ENCODE measurements at regions of chr10 and their contacts with region 1.

Region 1: GRCh38 chr10:35546824-35547273 is 58.3 kb upstream of the GJD4 start:
- DNase-seq: peak; percentile 61 to 78
- H3K4me3 ChIP-seq: no peak overlapping the region
- H3K27ac ChIP-seq: peak overlapping the region; percentile 32; the same call in 1 of the 2 replicates
- H3K4me1 ChIP-seq: peaks cover 16% of the 10 kb centered on the region
- H3K27me3 ChIP-seq: no peaks in the 10 kb centered on the region
- CTCF ChIP-seq: no peak

Region 2: DNA sequence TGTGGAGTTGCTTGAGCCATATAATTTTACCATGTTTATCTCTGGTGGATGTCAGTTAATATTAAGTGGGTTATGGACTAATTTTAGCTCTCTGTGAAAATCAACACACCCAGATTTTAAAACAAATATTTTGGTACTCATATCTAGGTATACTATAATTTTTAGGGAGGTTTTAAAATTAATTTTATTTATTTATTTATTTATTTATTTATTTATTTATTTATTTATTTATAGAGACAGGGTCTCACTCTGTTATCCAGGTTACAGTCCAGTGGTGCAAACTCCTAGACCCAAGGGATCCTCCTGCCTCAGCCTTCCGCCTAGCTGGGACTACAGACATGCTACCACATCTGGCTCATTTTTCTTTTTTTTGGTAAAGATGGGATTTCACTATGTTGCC is 427.5 kb before region 1 on chr10:
- CTCF ChIA-PET with region 1: no interaction called
- POLR2A ChIA-PET with region 1: no interaction called
- intact Hi-C with region 1: no loop called
- DNase-seq: no peak
- H3K4me3 ChIP-seq: no peak overlapping the region
- H3K27ac ChIP-seq: no peak overlapping the region
- H3K4me1 ChIP-seq: no peaks in the 10 kb centered on the region
- H3K27me3 ChIP-seq: no peaks in the 10 kb centered on the region
- CTCF ChIP-seq: no peak

Region 3: GRCh38 chr10:35306852-35307256 is 240.0 kb before region 1 on chr10:
- CTCF ChIA-PET with region 1: no interaction called
- POLR2A ChIA-PET with region 1: no interaction called
- intact Hi-C with region 1: loop called (anchors 1 kb)
- DNase-seq: peak; percentile 92 to 95
- H3K4me3 ChIP-seq: peak overlapping the region; percentile 27; the same call in 1 of the 2 replicates
- H3K27ac ChIP-seq: peak overlapping the region; percentile 91
- H3K4me1 ChIP-seq: peaks cover 16% of the 10 kb centered on the region
- H3K27me3 ChIP-seq: no peaks in the 10 kb centered on the region
- CTCF ChIP-seq: no peak

Region 4: DNA sequence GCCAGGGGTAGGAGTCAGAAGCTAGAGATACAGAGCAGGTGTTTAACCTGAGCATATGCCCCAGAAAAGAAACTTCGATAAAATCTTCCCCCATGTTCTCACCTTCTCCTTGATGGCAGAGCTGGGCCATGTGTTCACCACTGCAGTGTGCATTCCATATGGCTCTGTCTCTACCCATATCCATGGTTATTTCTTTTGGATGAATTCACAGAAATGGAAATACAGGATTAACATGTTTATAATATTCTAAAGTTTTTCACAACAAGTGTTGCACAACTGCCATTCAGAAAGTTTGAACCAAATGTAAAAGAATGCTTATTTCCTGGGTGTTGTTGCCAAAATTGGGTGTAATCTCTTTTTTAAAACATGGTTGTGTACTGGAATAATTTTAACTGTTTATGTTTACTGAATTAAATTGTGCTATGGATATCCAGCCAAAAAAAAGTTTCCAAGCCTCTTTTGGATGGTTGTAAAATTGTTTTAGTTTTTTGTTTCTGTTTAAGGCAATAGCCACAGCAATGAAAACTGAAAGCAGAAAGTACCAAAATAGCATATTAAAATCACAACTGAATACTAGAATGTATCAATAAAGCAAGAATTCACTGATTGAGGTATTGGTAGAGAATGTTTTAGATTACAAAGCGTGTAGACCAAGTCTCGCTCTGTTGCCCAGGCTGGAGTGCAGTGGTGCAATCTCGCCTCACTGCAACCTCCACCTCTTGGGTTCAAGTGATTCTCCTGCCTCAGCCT is 230.5 kb before region 1 on chr10:
- CTCF ChIA-PET with region 1: interaction called, 14 read pairs
- POLR2A ChIA-PET with region 1: no interaction called
- intact Hi-C with region 1: no loop called
- DNase-seq: no peak
- H3K4me3 ChIP-seq: no peak overlapping the region
- H3K27ac ChIP-seq: no peak overlapping the region
- H3K4me1 ChIP-seq: no peaks in the 10 kb centered on the region
- H3K27me3 ChIP-seq: no peaks in the 10 kb centered on the region
- CTCF ChIP-seq: no peak

Region 5: DNA sequence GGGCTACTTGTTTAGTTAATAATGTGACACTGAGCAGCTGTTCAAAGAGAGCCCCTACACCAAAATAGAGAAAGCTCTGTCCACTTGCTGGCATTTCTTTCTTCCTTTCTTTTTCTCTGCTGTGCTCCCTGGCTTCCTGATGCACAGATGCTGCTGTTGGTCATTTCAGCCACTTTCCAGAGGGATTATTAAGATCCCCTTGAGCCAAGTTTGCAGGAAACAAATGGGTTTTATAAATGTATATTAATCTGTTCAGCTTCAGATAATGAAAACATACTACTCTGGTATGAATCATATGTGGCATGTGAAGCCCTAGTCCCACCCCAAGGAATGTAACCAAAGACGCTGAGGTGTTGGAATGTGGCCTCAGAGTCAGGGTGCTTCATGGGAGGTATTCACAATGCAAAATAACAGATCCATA is 733.5 kb after region 1 on chr10:
- CTCF ChIA-PET with region 1: no interaction called
- POLR2A ChIA-PET with region 1: no interaction called
- intact Hi-C with region 1: no loop called
- DNase-seq: no peak
- H3K4me3 ChIP-seq: no peak overlapping the region
- H3K27ac ChIP-seq: no peak overlapping the region
- H3K4me1 ChIP-seq: no peaks in the 10 kb centered on the region
- H3K27me3 ChIP-seq: 0 out of 2 replicates have a peak, but pooled peaks cover 6% of the 10 kb centered on the region
- CTCF ChIP-seq: no peak